Right ventricle myocardium superior (tissue), 1 donor: ENCODE measurements at regions of chr21 and their contacts with region 1.

Region 1: GRCh38 chr21:31604591-31605190 is 54.8 kb upstream of the SOD1 start:
- DNase-seq: peak; percentile 78
- ATAC-seq: peak; percentile 82

Region 2: GRCh38 chr21:31012133-31013089 is 592.3 kb before region 1 on chr21:
- intact Hi-C with region 1: no loop called
- DNase-seq: no peak
- ATAC-seq: no peak

Region 3: DNA sequence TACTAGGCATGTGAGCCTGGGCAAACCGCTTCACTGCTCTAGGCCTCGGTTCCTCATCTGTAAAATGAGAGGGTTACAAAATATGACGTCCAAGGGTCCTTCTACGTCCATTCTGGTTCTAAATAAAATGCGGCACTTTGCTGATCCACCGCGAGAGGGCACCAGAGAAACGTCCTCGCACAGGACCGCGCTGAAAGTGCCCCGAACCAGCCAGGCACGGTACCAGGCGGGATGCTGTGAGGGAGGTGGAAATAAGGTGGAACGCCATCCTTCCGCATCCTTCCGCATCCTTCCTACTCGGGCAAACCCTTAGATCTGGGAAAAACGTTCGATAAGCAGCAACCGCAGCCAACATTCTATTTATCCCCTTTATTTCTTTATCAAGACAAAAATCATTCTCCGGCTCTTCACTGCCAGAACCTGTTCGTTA is 506.1 kb before region 1 on chr21:
- intact Hi-C with region 1: loop called (anchors 5 kb)
- DNase-seq: peak; percentile 80
- ATAC-seq: peak; percentile 82

Region 4: GRCh38 chr21:31198575-31198974 is 406.1 kb before region 1 on chr21:
- intact Hi-C with region 1: loop called (anchors 5 kb)
- DNase-seq: no peak
- ATAC-seq: peak; percentile 53